Activated CD8-positive, alpha-beta T cell treated with anti-CD3 and anti-CD28 coated beads, Interleukin-2, amount 10 ng/mL, durations not matched to agents 7 days and 5 days (primary cell): ENCODE measurements at regions of chr4 and their contacts with region 1.

Region 1: GRCh38 chr4:88533937-88534750 is 10.6 kb upstream of the PYURF start:
- DNase-seq: no peak
- ATAC-seq: no peak
- H3K4me3 Mint-ChIP-seq: no peak overlapping the region
- H3K27ac Mint-ChIP-seq: no peak overlapping the region
- H3K4me1 Mint-ChIP-seq: peaks cover 1% of the 10 kb centered on the region
- H3K27me3 Mint-ChIP-seq: peaks cover 3% of the 10 kb centered on the region

Region 2: DNA sequence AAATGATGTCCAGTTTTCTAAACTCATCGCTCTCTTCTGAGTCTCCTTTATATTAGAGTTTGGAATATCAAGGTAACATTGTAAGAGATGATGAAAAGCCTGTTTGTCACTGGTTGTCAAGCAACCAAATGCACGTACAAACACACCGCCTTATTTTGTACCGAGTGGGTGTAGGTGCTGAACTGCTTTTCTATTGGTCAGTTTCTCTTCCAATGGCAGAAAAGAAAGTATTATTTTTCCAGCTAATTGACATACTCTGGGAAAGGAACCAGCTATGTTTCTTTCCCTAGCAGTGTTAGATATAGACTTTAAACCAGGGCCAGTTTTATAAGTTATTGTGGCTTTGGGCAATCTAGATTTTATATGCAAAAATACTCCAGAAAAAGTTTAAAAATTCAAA is 243.1 kb before region 1 on chr4:
- CTCF ChIA-PET with region 1: no interaction called
- POLR2A ChIA-PET with region 1: no interaction called
- DNase-seq: no peak
- ATAC-seq: no peak
- H3K4me3 Mint-ChIP-seq: no peak overlapping the region
- H3K27ac Mint-ChIP-seq: no peak overlapping the region
- H3K4me1 Mint-ChIP-seq: peaks cover 10% of the 10 kb centered on the region
- H3K27me3 Mint-ChIP-seq: no peaks in the 10 kb centered on the region

Region 3: GRCh38 chr4:88429401-88429800 is 104.7 kb before region 1 on chr4:
- CTCF ChIA-PET with region 1: no interaction called
- POLR2A ChIA-PET with region 1: no interaction called
- DNase-seq: no peak
- ATAC-seq: no peak
- H3K4me3 Mint-ChIP-seq: no peak overlapping the region
- H3K27ac Mint-ChIP-seq: no peak overlapping the region
- H3K4me1 Mint-ChIP-seq: no peaks in the 10 kb centered on the region
- H3K27me3 Mint-ChIP-seq: no peaks in the 10 kb centered on the region

Region 4: DNA sequence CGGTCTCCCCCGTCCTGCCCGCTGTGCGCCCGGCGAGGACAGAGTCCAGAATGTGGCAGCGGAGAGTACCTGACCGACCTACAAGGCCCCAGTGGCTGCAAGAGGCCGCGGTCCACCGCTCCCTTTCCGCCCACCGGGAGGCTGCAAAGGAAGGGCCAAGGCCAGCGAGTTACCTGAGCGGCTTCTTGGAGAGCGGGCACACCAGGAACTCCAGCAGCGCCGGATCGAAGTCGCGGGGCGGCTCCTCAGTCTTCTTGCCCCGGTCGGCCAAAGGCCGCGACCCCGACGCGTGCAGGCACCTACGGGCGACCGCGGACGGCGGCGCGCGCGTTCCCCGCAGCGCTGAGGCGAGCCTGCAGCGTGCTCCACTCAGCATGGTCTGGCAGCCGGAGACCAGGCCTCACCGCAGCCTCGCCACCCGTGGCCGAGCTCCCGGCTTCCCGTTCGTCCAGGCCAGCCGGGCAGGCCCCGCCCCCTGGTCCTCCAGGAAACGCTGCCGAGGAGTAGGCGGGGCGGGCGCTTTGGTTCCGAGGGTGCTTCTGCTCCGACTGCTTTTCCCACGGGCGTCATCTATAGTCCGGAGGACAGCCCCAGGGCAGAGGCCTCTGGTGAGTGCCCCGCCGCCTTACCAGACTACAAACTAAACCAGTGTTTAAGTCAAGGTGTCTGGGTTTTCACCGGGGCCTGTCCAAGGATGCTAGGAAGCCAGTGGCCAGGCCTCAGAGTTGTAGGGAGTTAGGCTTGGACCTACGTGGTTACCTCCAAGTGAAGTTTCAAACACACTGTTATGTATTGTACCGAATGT is 10.6 kb before region 1 on chr4 and contains the start of gene PYURF:
- CTCF ChIA-PET with region 1: interaction called, 35 read pairs
- POLR2A ChIA-PET with region 1: no interaction called
- DNase-seq: peak; percentile 76
- ATAC-seq: peak; percentile 86
- H3K4me3 Mint-ChIP-seq: peak within 1 kb of the TSS; percentile 95
- H3K27ac Mint-ChIP-seq: peak within 1 kb of the TSS; percentile 88
- H3K4me1 Mint-ChIP-seq: peaks cover 47% of the 10 kb centered on the region
- H3K27me3 Mint-ChIP-seq: no peaks in the 10 kb centered on the region
- total RNA-seq, gene PYURF: 43.7 to 48.7 TPM

Region 5: GRCh38 chr4:88591787-88592599 is 57.8 kb after region 1 on chr4 and contains the start of gene HERC3:
- CTCF ChIA-PET with region 1: interaction called, 12 read pairs
- POLR2A ChIA-PET with region 1: no interaction called
- DNase-seq: peak; percentile 87
- ATAC-seq: peak; percentile 96
- H3K4me3 Mint-ChIP-seq: peak within 1 kb of the TSS; percentile 86
- H3K27ac Mint-ChIP-seq: peak within 1 kb of the TSS; percentile 79
- H3K4me1 Mint-ChIP-seq: peaks cover 34% of the 10 kb centered on the region
- H3K27me3 Mint-ChIP-seq: peaks cover 5% of the 10 kb centered on the region
- total RNA-seq, gene HERC3: 22.7 to 26.1 TPM

Region 6: GRCh38 chr4:88605736-88606135 is 71.6 kb after region 1 on chr4:
- CTCF ChIA-PET with region 1: no interaction called
- POLR2A ChIA-PET with region 1: no interaction called
- DNase-seq: peak; percentile 32
- ATAC-seq: peak; percentile 63
- H3K4me3 Mint-ChIP-seq: no peak overlapping the region
- H3K27ac Mint-ChIP-seq: no peak overlapping the region
- H3K4me1 Mint-ChIP-seq: peaks cover 50% of the 10 kb centered on the region
- H3K27me3 Mint-ChIP-seq: no peaks in the 10 kb centered on the region

Region 7: DNA sequence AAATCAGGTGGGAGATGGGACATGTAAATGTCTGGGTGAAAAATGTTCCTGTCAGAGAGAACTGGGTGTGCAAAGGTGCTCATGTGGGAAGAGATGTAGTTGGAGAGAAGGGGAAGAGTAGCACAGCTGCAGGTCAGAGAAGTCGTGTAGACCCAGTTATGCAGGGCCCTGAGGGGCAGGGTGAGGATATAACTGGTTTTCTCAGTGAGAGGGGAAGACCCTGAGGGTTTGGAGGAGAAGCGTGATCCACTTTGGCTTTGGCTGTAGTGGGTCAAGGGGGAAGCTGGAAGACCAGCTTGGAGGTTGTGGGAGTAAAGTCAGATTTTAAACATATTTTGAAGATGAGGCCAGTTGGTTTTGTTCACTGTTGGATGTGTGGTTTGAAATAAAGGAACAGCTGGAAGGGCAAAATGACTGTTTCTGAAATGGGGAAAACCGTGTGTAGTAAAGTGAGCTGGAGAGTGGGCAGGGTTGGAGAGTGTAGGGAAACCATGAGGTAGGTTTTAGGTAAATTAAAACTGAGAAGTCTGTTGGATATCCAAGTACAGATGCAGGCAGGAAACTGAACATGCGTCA is 119.3 kb after region 1 on chr4:
- CTCF ChIA-PET with region 1: interaction called, 28 read pairs
- POLR2A ChIA-PET with region 1: no interaction called
- DNase-seq: no peak
- ATAC-seq: no peak
- H3K4me3 Mint-ChIP-seq: no peak overlapping the region
- H3K27ac Mint-ChIP-seq: no peak overlapping the region
- H3K4me1 Mint-ChIP-seq: no peaks in the 10 kb centered on the region
- H3K27me3 Mint-ChIP-seq: no peaks in the 10 kb centered on the region

Region 8: DNA sequence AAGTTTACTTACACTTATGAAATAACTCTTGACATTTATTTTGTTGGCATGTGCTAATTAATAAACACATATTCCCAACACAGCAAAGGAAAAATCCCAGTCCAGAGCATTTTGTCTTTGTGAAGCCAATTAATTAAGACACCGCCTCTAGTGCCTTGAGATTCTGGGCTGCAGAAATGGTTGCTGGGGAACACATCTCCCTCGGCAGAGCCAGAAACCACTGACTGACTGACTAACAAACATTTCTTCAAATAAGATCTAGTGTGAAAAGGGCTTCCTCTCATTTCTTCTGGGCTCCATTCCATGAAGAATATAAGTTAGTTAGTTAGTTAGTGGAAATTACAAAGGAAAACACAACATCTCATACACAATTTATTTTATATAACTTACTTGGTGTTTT is 191.8 kb after region 1 on chr4:
- CTCF ChIA-PET with region 1: interaction called, 14 read pairs
- POLR2A ChIA-PET with region 1: no interaction called
- DNase-seq: no peak
- ATAC-seq: no peak
- H3K4me3 Mint-ChIP-seq: no peak overlapping the region
- H3K27ac Mint-ChIP-seq: no peak overlapping the region
- H3K4me1 Mint-ChIP-seq: no peaks in the 10 kb centered on the region
- H3K27me3 Mint-ChIP-seq: no peaks in the 10 kb centered on the region

Region 9: DNA sequence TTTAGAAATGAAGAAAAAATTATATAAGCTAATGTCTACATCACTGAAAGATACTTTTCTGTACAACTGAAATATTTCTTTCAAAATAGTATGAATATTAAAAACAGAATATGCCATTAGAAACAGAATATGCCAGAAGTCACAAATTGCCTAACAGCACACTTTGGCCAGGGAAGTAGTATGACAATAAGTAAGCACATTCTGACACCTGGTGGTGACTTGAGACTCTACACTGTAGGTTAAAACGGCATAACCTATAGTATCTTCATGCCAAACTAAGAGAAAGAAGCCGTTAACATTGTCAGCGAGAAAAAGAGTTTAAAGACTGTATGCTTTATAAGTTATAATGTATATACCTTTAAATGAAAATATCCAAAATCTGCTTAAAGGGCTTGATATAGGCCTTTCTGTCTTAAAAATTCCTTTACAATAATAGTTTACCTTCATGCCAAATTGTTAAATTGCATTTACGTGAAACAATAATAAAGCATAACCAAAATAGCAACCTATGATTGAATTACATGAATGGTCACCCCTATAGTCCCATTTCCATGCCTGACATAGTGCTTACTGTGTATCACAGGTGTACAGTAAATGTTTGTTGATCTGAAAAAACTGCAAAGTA is 490.0 kb after region 1 on chr4:
- CTCF ChIA-PET with region 1: interaction called, 19 read pairs
- POLR2A ChIA-PET with region 1: interaction called, 3 read pairs
- DNase-seq: peak; percentile 70
- ATAC-seq: peak; percentile 94
- H3K4me3 Mint-ChIP-seq: no peak overlapping the region
- H3K27ac Mint-ChIP-seq: no peak overlapping the region
- H3K4me1 Mint-ChIP-seq: no peaks in the 10 kb centered on the region
- H3K27me3 Mint-ChIP-seq: no peaks in the 10 kb centered on the region